Left lung (tissue), 14 donors: ENCODE measurements at regions of chr9 and their contacts with region 1.

Region 1: DNA sequence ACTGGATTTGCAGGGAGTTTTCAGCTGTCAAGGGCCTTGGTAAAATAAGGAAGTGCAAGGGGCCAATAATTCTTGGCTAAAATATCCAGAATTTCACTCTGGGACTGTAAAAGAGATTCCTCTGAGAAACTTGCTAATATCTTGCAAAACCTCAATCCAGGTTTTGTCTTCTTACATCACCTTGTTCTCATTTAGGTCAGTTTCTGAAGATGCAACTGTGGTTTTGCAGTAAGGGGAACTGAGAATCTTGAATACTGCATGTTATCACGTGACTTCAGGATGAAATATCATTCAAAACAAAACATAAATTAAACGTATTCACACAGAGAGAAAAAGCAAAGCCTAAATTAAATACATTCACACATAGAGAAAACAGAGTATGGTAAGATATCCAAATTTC is 35.0 kb upstream of the RIC1 start:
- DNase-seq: no peak
- ATAC-seq: no peak
- H3K4me3 ChIP-seq: no peak overlapping the region
- H3K27ac ChIP-seq: no peak overlapping the region
- H3K4me1 ChIP-seq: peaks cover 0 to 20% of the 10 kb centered on the region in 2 donors
- H3K27me3 ChIP-seq: no peaks in the 10 kb centered on the region
- CTCF ChIP-seq: no peak

Region 2: GRCh38 chr9:5186416-5187169 is 407.3 kb before region 1 on chr9:
- intact Hi-C with region 1: loop called in 1 of 2 experiments (anchors 10 kb)
- DNase-seq: peak in 2 of 4 donors; percentile 3 to 49
- ATAC-seq: peak; percentile 95
- H3K4me3 ChIP-seq: no peak overlapping the region
- H3K27ac ChIP-seq: no peak overlapping the region
- H3K4me1 ChIP-seq: no peaks in the 10 kb centered on the region
- H3K27me3 ChIP-seq: no peaks in the 10 kb centered on the region
- CTCF ChIP-seq: peak; percentile 59 to 69

Region 3: GRCh38 chr9:5450359-5451091 is 143.4 kb before region 1 on chr9 and contains the start of gene CD274:
- intact Hi-C with region 1: loop called in 1 of 2 experiments (anchors 5 kb)
- DNase-seq: peak; percentile 72 to 98 (median 92)
- ATAC-seq: peak; percentile 97
- H3K4me3 ChIP-seq: peak within 1 kb of the TSS; percentile 46 to 63
- H3K27ac ChIP-seq: peak within 1 kb of the TSS; percentile 90 to 91
- H3K4me1 ChIP-seq: peaks cover 8 to 75% of the 10 kb centered on the region in 2 donors
- H3K27me3 ChIP-seq: no peaks in the 10 kb centered on the region
- CTCF ChIP-seq: peak; percentile 59 to 67
- polyA plus RNA-seq, gene CD274: 0.24 to 1.3 (median 1.0) TPM

Region 4: DNA sequence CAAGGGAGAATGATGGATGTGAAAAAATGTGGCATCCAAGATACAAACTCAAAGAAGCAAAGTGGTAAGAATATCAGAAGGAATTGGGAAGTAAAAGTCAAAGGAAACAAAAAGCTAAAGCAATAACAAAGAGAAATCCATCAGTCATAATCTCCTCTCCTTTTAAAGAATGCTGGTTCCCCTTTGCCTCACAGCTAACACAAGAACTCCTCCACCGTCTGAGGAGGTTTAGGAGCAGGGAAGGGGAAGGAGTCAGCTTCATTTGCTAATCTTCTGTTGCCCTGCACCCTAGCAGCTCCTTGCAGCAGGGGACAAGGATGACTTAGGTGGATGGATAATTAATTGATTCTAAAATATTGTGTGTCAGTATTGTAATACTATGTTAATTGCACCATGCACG is 127.1 kb before region 1 on chr9:
- intact Hi-C with region 1: no loop called
- DNase-seq: no peak
- ATAC-seq: peak; percentile 25
- H3K4me3 ChIP-seq: no peak overlapping the region
- H3K27ac ChIP-seq: peak overlapping the region in 1 of 2 donors; percentile 71
- H3K4me1 ChIP-seq: peaks cover 0 to 28% of the 10 kb centered on the region in 2 donors
- H3K27me3 ChIP-seq: no peaks in the 10 kb centered on the region
- CTCF ChIP-seq: no peak